ENCODE measurements at regions of chr22 and their contacts with region 1.

Region 1: GRCh38 chr22:34111210-34111824 is 191.0 kb upstream of the LARGE1 start:
- DNase-seq: peak; percentile 55
- CTCF ChIP-seq: peak; percentile 55

Region 2: GRCh38 chr22:33519071-33519973 is 592.0 kb before region 1 on chr22:
- in situ Hi-C with region 1: loop called (anchors 25 kb)
- DNase-seq: peak; percentile 83
- CTCF ChIP-seq: peak; percentile 36

Region 3: DNA sequence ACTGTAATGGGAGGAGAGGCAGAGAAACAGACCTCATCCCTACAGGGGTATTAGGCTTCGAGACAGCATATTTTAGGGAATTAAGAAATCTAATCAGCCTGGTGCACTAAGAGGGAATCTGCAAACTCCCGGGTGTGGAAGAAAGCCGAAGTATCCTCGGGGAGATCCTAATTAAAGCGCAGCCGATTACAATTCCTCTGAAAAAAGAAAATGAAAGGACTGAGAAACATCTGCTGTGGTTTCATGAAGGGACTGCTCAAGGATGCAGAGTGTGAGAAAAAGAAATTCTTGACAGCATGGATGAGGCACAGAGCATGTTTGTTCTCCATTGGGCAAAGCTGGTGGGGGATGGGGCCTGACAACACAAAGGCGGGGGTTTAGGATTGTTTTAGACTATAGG is 99.0 kb after region 1 on chr22:
- in situ Hi-C with region 1: no loop called
- DNase-seq: no peak
- CTCF ChIP-seq: no peak